ENCODE measurements at regions of chr10 and their contacts with region 1.

Region 1: DNA sequence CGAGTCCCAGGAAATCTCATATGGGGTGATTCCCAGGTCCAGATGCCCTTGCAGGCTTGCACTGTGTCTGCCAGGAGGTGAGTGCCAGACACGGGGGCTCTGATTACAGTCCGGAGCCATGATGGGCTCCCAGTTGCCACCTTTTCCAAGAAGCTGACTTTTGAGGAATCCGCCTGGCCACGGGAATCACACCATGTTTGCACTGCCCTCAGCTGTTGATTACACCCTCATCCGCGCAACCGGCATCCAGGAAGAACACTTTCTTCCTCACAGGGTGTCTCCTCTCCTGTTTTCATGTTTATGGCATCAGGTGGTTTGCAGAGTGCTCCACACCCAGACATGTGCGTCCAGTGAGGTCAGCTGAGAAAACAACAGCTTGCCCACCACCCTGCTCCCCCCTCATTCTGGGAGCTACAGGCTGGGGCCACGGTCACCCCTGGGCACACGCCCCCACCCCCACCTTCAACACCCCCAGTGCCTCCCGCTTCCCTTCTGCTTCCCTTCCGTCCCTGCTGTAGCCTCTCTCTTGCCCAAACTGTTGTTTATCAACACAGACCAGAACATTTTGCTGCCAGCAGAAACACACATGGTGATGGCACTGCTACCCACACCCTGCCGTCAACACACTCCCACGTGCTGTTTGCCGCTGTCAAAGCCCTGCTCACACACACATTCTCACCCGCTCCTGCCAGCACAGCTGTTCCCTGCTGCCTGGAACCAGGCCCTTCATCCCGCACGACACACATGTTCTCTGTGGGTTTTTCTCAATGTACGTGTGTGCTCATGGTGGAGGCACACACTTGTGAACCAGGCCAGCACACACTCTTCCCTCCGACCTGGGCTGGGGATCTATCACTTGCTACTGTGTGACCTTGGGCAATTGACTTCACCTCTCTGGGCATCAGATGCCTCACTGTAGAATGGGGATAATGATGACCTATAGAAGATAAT is 35.8 kb downstream of the DDIT4 start:
- DNase-seq: no peak
- H3K4me3 ChIP-seq: 0 out of 2 replicates have a peak overlapping the region, but pooled peaks have one; percentile 7
- H3K27ac ChIP-seq: peak overlapping the region; percentile 93
- H3K4me1 ChIP-seq: peaks cover 67% of the 10 kb centered on the region
- H3K27me3 ChIP-seq: no peaks in the 10 kb centered on the region
- CTCF ChIP-seq: no peak

Region 2: DNA sequence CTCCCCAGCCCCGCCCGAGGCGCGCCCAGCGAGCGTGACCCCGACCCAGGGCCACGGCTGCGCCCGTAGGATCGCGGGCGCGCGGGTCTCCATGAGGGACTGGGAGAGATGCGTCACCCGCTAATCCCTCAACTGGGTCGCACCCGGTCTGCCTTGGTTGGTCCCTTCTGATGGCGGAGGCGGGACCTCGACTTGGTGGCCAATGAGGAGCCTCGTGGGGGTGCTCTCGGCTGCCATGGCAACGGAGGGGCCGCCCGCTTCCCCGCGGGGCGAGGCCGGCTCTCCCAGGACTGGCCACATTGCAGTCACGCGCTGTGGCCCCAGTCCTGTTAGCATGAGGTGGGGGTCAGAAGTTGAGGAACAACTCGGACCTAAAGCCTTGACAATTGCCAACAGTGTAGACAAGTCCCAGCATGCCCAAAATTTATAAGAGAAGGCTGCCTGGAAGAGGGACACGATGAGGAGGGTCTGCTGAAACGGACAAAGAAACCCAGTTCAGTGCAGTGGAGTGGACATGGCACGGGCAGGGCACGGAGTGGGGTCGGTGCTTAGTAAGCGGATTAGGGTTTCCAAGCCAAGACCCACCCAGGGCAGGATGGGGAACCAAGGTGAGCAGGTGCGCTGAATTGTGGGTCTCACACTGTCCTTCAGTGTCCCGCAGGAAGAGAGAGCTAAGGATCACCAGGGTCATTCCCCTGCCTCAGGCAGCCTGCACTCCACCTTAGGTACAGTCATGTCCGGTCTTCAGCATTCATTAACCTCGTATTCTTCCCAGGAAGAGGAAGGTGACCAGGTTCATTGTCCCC is 11.4 kb before region 1 on chr10:
- CTCF ChIA-PET with region 1: no interaction called
- POLR2A ChIA-PET with region 1: no interaction called
- intact Hi-C with region 1: loop called (anchors 1 kb)
- DNase-seq: peak; percentile 95 to 98
- H3K4me3 ChIP-seq: peak overlapping the region; percentile 66
- H3K27ac ChIP-seq: peak overlapping the region; percentile 89
- H3K4me1 ChIP-seq: peaks cover 42% of the 10 kb centered on the region
- H3K27me3 ChIP-seq: no peaks in the 10 kb centered on the region
- CTCF ChIP-seq: no peak

Measured in PC-9 (cell line).